ENCODE measurements at regions of chr1 and their contacts with region 1.

Region 1: DNA sequence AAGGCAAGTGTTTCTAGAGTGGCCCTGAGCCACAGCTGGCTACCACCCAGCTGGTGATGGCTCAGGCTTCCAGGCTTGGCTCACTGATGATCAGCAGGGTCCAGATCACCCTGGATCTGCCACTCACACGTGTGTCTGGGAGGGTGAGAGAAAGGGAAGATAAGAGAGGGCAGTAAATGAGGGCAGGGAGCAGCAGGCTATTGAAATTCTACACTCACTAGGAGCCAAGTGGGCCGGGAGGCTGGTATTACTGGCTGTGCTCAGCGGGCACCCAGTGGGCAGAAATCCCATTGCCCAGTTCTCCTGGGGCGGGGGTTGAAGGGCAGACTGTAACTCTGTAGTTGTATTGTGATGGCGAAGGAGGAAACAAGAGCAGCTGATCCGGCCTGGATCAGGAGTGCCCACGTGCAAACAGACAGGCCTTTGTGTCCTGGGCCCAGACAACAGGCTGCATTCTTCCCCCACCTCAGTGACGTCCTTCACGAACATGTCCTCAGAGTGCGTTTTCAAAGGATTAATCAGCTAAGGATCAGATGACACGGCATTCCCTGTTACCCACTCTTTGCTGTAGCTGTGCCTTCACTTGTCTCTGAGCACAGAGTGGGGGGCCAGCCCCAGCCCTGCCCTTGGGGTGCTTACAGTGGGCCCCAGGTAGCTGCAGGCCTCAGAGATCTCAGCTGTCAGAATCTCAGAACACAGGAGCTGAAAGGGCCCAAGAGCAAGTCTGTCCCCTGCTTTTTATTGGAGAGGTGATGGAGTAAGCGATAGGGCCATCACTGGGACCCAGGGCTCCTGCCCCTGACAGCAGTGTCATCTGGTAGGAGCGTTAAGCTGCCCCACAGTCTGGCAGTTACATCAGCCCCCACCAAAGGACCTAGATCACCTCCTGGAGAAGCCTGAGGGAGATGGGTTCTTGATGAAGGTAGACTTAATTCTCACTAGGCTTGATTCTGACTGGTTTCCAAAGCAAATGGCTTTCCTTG is 60.5 kb downstream of the ATP1A1 start:
- DNase-seq: peak; percentile 66 to 84
- ATAC-seq: peak; percentile 89 to 95 (median 92)
- H3K4me3 ChIP-seq: peak overlapping the region; percentile 20
- H3K27ac ChIP-seq: peak overlapping the region; percentile 82
- H3K4me1 ChIP-seq: peaks cover 14% of the 10 kb centered on the region
- H3K27me3 ChIP-seq: no peaks in the 10 kb centered on the region
- CTCF ChIP-seq: no peak

Region 2: GRCh38 chr1:116075577-116076380 is 357.8 kb before region 1 on chr1:
- intact Hi-C with region 1: no loop called
- DNase-seq: no peak
- ATAC-seq: no peak
- H3K4me3 ChIP-seq: no peak overlapping the region
- H3K27ac ChIP-seq: no peak overlapping the region
- H3K4me1 ChIP-seq: no peaks in the 10 kb centered on the region
- H3K27me3 ChIP-seq: no peaks in the 10 kb centered on the region
- CTCF ChIP-seq: no peak

Region 3: DNA sequence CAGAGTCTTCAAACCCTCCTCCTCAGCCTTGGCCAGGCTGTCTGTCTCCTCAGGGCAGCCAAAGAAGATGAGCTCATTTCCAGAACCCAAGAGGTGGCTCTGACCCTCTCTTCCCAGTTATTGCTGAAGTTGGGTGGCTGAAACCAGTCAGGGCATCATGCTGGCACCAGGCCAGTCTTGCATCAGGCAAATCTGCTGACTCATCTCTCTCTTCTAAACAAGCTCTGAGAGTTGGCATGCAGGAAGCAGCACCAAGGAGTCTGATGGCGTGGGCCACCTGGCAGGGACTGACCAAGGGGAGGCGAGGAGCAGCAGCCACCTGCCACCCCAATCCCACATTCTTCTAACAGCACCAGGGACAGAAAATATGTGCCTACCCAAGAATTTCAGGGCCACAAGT is 165.4 kb before region 1 on chr1:
- intact Hi-C with region 1: no loop called
- DNase-seq: peak; percentile 48 to 61
- ATAC-seq: peak in 2 of 4 donors; percentile 31 to 53
- H3K4me3 ChIP-seq: no peak overlapping the region
- H3K27ac ChIP-seq: no peak overlapping the region
- H3K4me1 ChIP-seq: no peaks in the 10 kb centered on the region
- H3K27me3 ChIP-seq: no peaks in the 10 kb centered on the region
- CTCF ChIP-seq: no peak

Region 4: GRCh38 chr1:116474921-116475849 is 41.6 kb after region 1 on chr1:
- intact Hi-C with region 1: loop called (anchors 5 kb)
- DNase-seq: peak; percentile 59 to 90
- ATAC-seq: peak; percentile 91 to 93 (median 92)
- H3K4me3 ChIP-seq: peak overlapping the region; percentile 20
- H3K27ac ChIP-seq: peak overlapping the region; percentile 80
- H3K4me1 ChIP-seq: peaks cover 23% of the 10 kb centered on the region
- H3K27me3 ChIP-seq: no peaks in the 10 kb centered on the region
- CTCF ChIP-seq: no peak

Measured in psoas muscle (tissue), 8 donors.